ENCODE measurements at regions of chr1 and their contacts with region 1.

Region 1: GRCh38 chr1:214445831-214446614 is 105.4 kb downstream of the PTPN14 start:
- DNase-seq: no peak
- ATAC-seq: peak; percentile 47
- H3K4me3 Mint-ChIP-seq: no peak overlapping the region
- H3K27ac Mint-ChIP-seq: peak overlapping the region; percentile 79
- H3K4me1 Mint-ChIP-seq: peaks cover 44% of the 10 kb centered on the region
- H3K27me3 Mint-ChIP-seq: peaks cover 2% of the 10 kb centered on the region

Region 2: DNA sequence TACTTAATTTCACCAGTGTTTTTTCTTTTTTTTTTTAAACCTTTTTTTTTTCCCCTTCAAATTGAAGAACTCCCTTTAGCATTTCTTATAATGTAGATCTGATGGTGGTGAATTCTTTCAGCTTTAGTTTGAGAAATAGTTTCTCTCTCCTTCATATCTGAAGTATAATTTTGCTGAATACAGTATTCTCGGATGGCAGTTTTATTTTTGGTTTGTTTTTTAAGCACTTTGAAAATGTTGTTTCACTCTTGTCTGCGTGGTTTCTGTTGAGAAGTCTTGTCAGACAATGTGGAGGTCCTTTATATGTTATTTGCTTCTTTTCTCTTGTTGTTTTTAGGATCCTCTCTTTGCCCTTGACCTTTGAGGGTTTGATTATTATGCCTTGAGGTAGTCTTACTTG is 1259.9 kb before region 1 on chr1:
- CTCF ChIA-PET with region 1: no interaction called
- POLR2A ChIA-PET with region 1: no interaction called
- intact Hi-C with region 1: no loop called
- DNase-seq: no peak
- ATAC-seq: no peak
- H3K4me3 Mint-ChIP-seq: no peak overlapping the region
- H3K27ac Mint-ChIP-seq: no peak overlapping the region
- H3K4me1 Mint-ChIP-seq: no peaks in the 10 kb centered on the region
- H3K27me3 Mint-ChIP-seq: no peaks in the 10 kb centered on the region

Region 3: GRCh38 chr1:214349781-214350180 is 96.2 kb before region 1 on chr1:
- CTCF ChIA-PET with region 1: no interaction called
- POLR2A ChIA-PET with region 1: no interaction called
- intact Hi-C with region 1: no loop called
- DNase-seq: no peak
- ATAC-seq: no peak
- H3K4me3 Mint-ChIP-seq: no peak overlapping the region
- H3K27ac Mint-ChIP-seq: no peak overlapping the region
- H3K4me1 Mint-ChIP-seq: no peaks in the 10 kb centered on the region
- H3K27me3 Mint-ChIP-seq: no peaks in the 10 kb centered on the region

Region 4: DNA sequence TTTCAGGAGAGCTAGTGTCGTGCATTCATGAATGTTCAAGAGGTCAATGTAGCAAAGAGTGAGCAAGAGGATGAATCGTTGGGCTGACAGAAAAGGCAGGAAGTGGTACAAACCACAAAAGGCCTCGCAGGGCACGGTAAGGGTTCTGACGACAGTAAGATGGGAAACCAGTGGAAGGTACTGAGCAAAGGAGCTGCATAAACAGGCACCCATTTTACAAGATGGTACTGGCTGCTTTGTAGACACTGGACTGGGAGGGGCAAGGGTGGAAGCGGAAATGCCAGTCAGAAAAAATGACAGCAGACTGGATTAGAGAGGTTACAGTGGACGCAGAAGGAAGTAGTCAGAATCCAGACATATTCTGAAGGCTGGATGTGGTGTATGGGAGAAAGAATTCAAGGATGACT is 18.1 kb before region 1 on chr1:
- CTCF ChIA-PET with region 1: interaction called, 4 read pairs
- POLR2A ChIA-PET with region 1: interaction called, 6 read pairs
- intact Hi-C with region 1: loop called in 1 of 2 experiments (anchors 2 kb)
- DNase-seq: peak; percentile 84
- ATAC-seq: peak; percentile 99
- H3K4me3 Mint-ChIP-seq: peak overlapping the region; percentile 36
- H3K27ac Mint-ChIP-seq: peak overlapping the region; percentile 91
- H3K4me1 Mint-ChIP-seq: peaks cover 28% of the 10 kb centered on the region
- H3K27me3 Mint-ChIP-seq: no peaks in the 10 kb centered on the region